Aorta (tissue), 5 donors: ENCODE measurements at regions of chr5 and their contacts with region 1.

Region 1: DNA sequence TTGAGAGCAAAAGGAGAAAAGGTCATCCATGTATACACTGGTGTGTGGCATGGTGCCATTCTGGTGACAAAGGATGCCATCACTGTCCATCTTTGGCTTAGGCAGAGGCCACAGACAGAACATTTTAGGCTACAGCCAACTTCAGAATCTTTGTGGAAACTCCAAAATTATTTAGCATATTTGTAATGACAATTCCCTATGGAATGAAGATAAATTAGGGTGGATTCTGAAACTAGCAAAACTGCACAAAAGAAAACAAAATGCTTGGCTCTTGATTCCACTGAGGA is 92.5 kb downstream of the FBXW11 start:
- DNase-seq: no peak
- ATAC-seq: no peak
- H3K4me3 ChIP-seq: no peak overlapping the region
- H3K27ac ChIP-seq: no peak overlapping the region
- H3K4me1 ChIP-seq: peaks cover 2 to 8% of the 10 kb centered on the region in 2 donors
- H3K27me3 ChIP-seq: no peaks in the 10 kb centered on the region

Region 2: GRCh38 chr5:172006321-172007174 is 92.6 kb after region 1 on chr5 and contains the start of gene FBXW11:
- intact Hi-C with region 1: loop called in 1 of 2 experiments (anchors 5 kb)
- DNase-seq: peak; percentile 98 to 99
- ATAC-seq: peak; percentile 97
- H3K4me3 ChIP-seq: peak within 1 kb of the TSS; percentile 79 to 92
- H3K27ac ChIP-seq: peak within 1 kb of the TSS; percentile 92 to 96
- H3K4me1 ChIP-seq: no peaks in the 10 kb centered on the region
- H3K27me3 ChIP-seq: no peaks in the 10 kb centered on the region
- total RNA-seq, gene FBXW11: 63.1 to 64.0 TPM

Region 3: GRCh38 chr5:172038167-172038566 is 124.2 kb after region 1 on chr5:
- intact Hi-C with region 1: loop called (anchors 2 to 5 kb)
- DNase-seq: no peak
- ATAC-seq: no peak
- H3K4me3 ChIP-seq: no peak overlapping the region
- H3K27ac ChIP-seq: no peak overlapping the region
- H3K4me1 ChIP-seq: no peaks in the 10 kb centered on the region
- H3K27me3 ChIP-seq: no peaks in the 10 kb centered on the region

Region 4: DNA sequence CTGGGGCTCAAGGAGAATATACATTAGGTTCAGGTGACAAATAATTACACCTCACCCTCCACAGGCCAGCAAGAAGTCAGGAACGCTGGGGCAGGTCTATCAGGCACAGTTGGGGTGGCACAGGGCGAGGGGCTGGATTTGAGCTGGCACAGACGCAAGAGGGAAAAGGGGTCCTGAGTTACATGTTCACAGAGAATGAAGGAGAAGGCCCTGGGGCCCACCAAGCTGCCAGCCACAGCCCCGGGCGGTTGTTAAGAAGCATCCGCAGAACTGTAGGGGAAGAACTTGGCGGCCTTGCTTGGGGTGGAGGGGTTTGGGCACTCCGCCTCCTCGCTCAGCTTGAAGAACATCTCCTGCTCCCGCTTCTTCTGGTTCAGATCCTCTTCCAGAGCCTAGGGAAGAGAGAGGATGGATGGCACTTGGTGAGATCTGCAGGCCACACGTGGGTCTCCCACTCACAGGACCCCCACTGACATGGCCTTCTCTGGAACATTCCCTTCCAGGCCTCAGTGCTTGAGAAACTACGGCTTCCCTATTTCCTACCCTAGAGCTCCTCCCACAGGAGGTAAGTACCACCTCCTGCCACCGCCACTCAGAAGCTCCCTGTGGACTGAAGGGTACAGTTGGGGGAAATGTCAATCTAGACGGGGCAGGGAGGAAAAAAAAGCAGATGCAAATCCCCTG is 130.8 kb after region 1 on chr5:
- intact Hi-C with region 1: loop called (anchors 2 to 5 kb)
- DNase-seq: no peak
- ATAC-seq: no peak
- H3K4me3 ChIP-seq: no peak overlapping the region
- H3K27ac ChIP-seq: no peak overlapping the region
- H3K4me1 ChIP-seq: no peaks in the 10 kb centered on the region
- H3K27me3 ChIP-seq: no peaks in the 10 kb centered on the region

Region 5: DNA sequence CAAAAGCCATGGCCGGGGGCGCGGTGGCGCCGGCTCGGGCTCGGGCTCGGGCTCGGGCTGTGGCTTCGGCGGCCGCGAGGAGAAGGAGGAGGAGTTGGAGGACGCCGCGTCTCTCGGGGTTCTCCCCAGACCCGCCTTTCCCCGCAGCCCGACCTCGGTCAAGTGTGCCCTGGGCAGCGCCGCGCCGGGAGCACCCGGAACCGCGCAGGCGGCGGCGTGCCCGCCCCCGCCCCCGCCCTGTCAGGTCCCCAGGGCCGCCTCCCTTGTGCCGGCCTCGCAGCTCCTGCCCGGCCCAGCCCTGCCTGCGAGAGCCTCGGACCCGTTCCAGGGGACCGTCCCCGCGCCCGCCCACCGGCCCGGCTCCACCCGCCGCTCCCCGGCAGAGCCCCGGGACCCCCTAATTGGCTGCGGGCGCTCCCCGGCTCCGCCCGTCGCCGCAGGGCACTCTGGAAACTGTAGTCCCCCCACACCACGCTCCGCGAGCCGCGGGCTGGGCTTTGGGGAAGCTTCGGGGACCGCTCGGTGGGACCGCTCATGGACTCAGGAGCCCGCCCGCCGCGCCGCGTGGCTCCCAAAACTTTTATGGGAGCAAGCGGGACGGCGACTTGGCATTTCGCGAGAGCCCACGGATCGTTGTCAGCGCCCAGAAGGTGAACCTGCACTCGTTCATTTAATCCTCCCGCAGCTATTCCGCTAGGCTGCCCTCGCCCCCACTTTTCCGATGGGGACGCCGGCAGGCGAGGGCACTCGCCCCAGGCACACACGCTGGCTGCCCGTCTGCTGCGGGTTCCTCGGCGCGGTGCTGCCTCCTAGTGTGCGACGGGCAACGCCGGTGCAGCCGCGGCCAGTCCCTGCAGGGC is 274.3 kb after region 1 on chr5 and contains the start of gene STK10:
- intact Hi-C with region 1: loop called in 1 of 2 experiments (anchors 10 kb)
- DNase-seq: peak; percentile 97 to 98
- ATAC-seq: peak; percentile 97
- H3K4me3 ChIP-seq: peak within 1 kb of the TSS; percentile 43 to 64
- H3K27ac ChIP-seq: peak within 1 kb of the TSS in 1 of 2 donors; percentile 14
- H3K4me1 ChIP-seq: no peaks in the 10 kb centered on the region
- H3K27me3 ChIP-seq: no peaks in the 10 kb centered on the region
- total RNA-seq, gene STK10: 32.5 to 67.7 TPM